ENCODE measurements at regions of chr9 and their contacts with region 1.

Region 1: DNA sequence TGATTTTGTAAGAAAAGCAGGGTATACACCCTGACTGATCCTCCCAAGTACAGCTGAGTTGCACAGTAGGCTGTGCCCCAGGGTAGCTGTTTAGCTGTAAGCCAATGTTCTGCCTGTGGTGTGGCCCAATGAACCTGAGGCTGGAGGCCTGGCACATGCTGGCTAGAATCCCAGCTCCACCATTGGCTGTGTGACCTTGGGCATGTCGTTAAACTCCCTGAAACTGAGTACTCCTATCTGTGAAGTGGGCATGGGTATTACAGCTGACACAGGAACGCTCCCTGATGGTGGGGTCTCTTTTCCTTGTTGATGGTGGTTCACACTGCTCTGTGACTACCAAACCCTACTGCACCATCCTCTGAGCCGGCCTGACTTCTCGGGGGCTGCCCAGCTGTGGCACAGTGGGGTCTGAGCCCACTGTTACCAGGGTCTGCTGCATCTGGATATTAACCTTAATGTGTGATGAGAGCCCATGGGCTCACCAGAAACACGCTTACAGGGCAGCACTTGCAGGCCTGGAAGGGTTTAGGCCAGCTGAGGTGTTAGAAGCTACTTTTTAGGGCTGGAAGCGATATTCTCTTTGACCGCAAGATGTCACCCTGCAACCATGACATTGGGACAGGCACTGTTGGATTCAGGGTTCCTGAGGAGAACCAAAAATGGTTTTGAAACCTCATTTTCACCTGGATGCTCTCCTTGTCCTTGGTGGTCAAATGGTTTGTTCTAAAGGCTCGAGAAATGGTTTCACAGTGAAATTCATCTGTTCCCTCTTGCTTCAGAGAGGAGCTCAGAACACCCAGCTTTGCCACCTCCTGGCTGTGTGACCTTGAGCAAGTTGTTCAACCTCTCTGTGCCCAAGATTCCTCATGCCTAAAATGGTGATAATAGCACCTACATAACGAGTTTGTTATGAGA is 6.8 kb upstream of the GADD45G start:
- DNase-seq: no peak
- H3K4me3 ChIP-seq: no peak overlapping the region
- H3K27ac ChIP-seq: no peak overlapping the region
- H3K4me1 ChIP-seq: peaks cover 0 to 4% (median 1%) of the 10 kb centered on the region in 4 donors
- H3K27me3 ChIP-seq: no peaks in the 10 kb centered on the region
- CTCF ChIP-seq: peak; percentile 77 to 87 (median 84)
- EP300 ChIP-seq: no peak
- POLR2A ChIP-seq: no peak

Region 2: GRCh38 chr9:89508951-89509615 is 88.9 kb before region 1 on chr9:
- intact Hi-C with region 1: no loop called
- DNase-seq: no peak
- H3K4me3 ChIP-seq: no peak overlapping the region
- H3K27ac ChIP-seq: no peak overlapping the region
- H3K4me1 ChIP-seq: no peaks in the 10 kb centered on the region
- H3K27me3 ChIP-seq: no peaks in the 10 kb centered on the region
- CTCF ChIP-seq: no peak
- EP300 ChIP-seq: no peak
- POLR2A ChIP-seq: no peak

Region 3: GRCh38 chr9:90102292-90102901 is 504.4 kb after region 1 on chr9:
- intact Hi-C with region 1: loop called (anchors 1 kb)
- DNase-seq: peak; percentile 94
- H3K4me3 ChIP-seq: no peak overlapping the region
- H3K27ac ChIP-seq: no peak overlapping the region
- H3K4me1 ChIP-seq: peaks cover 0 to 22% (median 10%) of the 10 kb centered on the region in 4 donors
- H3K27me3 ChIP-seq: no peaks in the 10 kb centered on the region
- CTCF ChIP-seq: peak; percentile 72 to 93 (median 88)
- EP300 ChIP-seq: no peak
- POLR2A ChIP-seq: no peak